Head of caudate nucleus (tissue), 42 donors: ENCODE measurements at regions of chr1 and their contacts with region 1.

Region 1: DNA sequence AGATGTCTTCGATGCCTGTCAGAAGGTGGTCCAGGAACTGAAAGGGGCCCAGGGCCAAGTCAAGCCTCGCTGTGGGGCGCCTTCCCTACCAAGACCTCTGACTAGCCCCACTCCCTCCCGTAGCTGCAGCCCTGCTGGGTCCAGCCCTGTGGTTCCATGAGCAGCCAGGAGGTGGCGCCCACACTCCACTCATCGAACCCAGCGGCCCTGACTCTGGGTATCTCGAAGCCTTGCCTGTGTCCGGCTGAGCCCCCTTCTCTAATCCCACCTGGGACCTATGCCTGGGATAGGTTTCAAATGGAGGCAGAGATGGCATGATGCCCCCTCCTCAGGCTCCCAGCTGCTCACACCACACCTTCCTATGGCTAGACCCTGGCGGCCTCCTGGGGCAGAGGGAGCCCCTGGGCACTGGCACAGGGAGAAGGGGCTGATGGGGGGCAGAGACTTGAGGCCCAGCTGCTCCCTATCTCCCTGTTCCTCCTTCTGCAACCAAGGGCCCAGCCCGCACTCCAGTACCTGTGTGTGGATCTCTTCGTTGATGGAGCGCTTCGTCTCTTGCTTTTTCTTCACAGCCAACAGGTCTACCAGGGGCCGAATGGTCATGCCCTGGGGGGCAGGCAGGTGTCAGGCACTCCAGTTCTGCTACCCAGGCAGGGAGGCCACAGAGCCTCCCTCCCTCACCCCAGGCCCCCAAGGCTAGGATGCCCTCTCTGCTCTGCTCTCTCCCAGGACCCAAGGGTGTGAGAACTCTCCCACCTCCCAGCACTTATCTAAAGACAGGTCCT is 52.0 kb downstream of the SLC9A1 start:
- DNase-seq: peak; percentile 53 to 94 (median 85)

Region 2: GRCh38 chr1:26999440-26999987 is 103.4 kb before region 1 on chr1:
- intact Hi-C with region 1: no loop called
- DNase-seq: no peak

Region 3: GRCh38 chr1:27044613-27045151 is 58.2 kb before region 1 on chr1:
- intact Hi-C with region 1: loop called (anchors 2 kb)
- DNase-seq: peak; percentile 68 to 96 (median 91)

Region 4: DNA sequence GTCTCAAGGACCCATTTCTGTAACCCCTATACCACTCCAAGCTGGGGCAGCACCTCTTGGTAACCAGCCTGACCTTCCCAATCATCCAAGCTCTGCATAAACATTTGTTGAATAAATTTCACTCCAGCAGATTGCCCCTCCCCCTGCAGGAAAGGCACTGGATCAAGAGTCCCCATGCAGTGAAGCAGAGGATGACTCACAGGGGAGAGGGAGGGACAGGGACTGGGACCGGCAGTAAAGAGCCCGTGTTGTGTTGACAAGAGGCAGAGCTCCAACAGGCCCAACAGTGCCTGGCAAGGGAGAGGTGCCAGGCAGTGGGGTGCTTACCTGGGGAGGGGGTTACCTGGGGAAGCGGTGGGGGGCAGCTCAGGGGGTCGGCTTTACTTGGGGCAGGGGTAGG is 19.8 kb after region 1 on chr1:
- intact Hi-C with region 1: no loop called
- DNase-seq: peak in 23 of 42 donors; percentile 36 to 83 (median 63)

Region 5: GRCh38 chr1:27284425-27285273 is 181.8 kb after region 1 on chr1:
- intact Hi-C with region 1: loop called (anchors 2 kb)
- DNase-seq: peak; percentile 66 to 96 (median 87)